IMR-90 (cell line): ENCODE measurements at regions of chr9 and their contacts with region 1.

Region 1: GRCh38 chr9:105157130-105157583 is 87.3 kb upstream of the SLC44A1 start:
- DNase-seq: peak; percentile 77
- ATAC-seq: peak; percentile 93
- H3K4me3 ChIP-seq: no peak overlapping the region
- H3K27ac ChIP-seq: peak overlapping the region; percentile 13; the same call in 1 of the 2 replicates
- H3K4me1 ChIP-seq: peaks cover 7% of the 10 kb centered on the region
- H3K27me3 ChIP-seq: no peaks in the 10 kb centered on the region
- CTCF ChIP-seq: peak; percentile 59
- POLR2A ChIP-seq: no peak
- RAD21 ChIP-seq: peak; percentile 69

Region 2: DNA sequence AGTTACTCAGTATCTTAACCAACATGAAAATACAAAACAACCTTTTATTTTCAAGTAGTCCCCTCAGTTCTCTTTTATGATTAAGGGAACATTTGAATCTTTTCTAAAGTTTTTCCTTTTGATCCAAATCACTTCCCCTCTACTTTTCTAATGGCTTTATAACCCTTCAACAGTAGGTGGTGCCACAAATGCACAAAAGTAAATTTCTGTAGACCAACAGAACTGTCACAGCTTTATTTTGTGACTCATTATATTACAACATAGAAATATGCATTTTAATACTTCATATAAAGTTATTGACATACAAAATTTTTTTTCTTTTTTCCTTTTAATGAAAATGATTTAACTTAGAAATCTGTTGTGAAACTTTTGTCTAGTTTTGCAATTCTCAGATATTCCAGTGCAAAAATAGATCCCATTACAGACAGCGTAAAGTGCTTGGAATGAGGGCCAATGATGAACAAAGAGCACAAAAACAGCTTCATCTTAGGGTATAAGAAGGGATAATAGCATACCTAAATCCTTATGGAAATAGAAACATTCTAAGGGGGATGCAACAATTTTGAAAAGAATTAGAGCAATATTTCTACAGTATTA is 376.3 kb before region 1 on chr9:
- CTCF ChIA-PET with region 1: no interaction called
- POLR2A ChIA-PET with region 1: no interaction called
- dilution Hi-C with region 1: no loop called
- in situ Hi-C with region 1: no loop called
- intact Hi-C with region 1: loop called (anchors 2 kb)
- DNase-seq: peak; percentile 32
- ATAC-seq: peak; percentile 51; the same call in 1 of the 2 replicates
- H3K4me3 ChIP-seq: no peak overlapping the region
- H3K27ac ChIP-seq: no peak overlapping the region
- H3K4me1 ChIP-seq: no peaks in the 10 kb centered on the region
- H3K27me3 ChIP-seq: no peaks in the 10 kb centered on the region
- CTCF ChIP-seq: peak; percentile 53
- POLR2A ChIP-seq: no peak
- RAD21 ChIP-seq: peak; percentile 64

Region 3: DNA sequence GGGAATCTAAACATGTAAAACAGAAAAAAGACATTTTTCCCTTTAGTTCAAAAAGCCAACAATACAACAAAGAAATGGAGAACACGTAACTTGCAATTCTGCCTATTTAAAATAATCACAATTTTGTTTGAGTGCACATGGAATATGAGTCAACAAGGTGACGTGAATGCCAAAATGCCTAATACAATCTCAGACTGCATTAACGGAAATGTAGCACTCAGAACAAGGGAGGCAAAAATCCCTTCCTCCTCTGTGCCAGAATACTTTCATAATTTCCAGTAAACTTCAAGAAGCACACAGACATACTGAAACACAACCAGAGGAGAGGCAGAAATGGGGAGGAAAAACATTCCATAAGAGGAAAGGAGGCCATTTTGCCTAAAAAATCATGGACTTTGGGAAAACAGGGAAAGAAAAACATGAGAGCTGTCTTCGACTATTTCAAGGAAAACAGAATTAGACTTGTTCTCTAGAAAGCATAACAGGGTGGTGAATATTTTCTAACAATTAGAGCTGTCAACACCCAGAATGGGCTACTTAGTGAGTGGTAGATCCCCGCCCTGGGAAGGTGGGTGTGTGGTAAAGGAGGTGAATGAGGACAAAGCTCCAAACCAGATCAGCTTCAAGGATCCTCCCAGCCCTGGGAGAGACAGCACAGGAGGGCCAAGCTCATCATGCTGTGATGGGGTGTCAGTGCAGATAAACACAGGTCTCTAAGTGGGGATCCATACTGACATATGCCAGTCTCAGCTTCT is 277.4 kb before region 1 on chr9:
- CTCF ChIA-PET with region 1: no interaction called
- POLR2A ChIA-PET with region 1: no interaction called
- dilution Hi-C with region 1: no loop called
- in situ Hi-C with region 1: no loop called
- intact Hi-C with region 1: no loop called
- DNase-seq: peak; percentile 88
- ATAC-seq: peak; percentile 72
- H3K4me3 ChIP-seq: no peak overlapping the region
- H3K27ac ChIP-seq: peak overlapping the region; percentile 26
- H3K4me1 ChIP-seq: 0 out of 2 replicates have a peak, but pooled peaks cover 4% of the 10 kb centered on the region
- H3K27me3 ChIP-seq: no peaks in the 10 kb centered on the region
- CTCF ChIP-seq: no peak
- POLR2A ChIP-seq: no peak
- RAD21 ChIP-seq: no peak

Region 4: GRCh38 chr9:104968025-104968982 is 188.9 kb before region 1 on chr9:
- CTCF ChIA-PET with region 1: no interaction called
- POLR2A ChIA-PET with region 1: no interaction called
- dilution Hi-C with region 1: no loop called
- in situ Hi-C with region 1: no loop called
- intact Hi-C with region 1: loop called (anchors 2 kb)
- DNase-seq: peak; percentile 90
- ATAC-seq: peak; percentile 94
- H3K4me3 ChIP-seq: peak overlapping the region; percentile 59
- H3K27ac ChIP-seq: peak overlapping the region; percentile 98
- H3K4me1 ChIP-seq: peaks cover 11% of the 10 kb centered on the region
- H3K27me3 ChIP-seq: no peaks in the 10 kb centered on the region
- CTCF ChIP-seq: no peak
- POLR2A ChIP-seq: no peak
- RAD21 ChIP-seq: 0 out of 2 replicates have a peak, but pooled peaks have one; percentile 1

Region 5: GRCh38 chr9:105064315-105065097 is 92.7 kb before region 1 on chr9:
- CTCF ChIA-PET with region 1: no interaction called
- POLR2A ChIA-PET with region 1: no interaction called
- dilution Hi-C with region 1: no loop called
- in situ Hi-C with region 1: no loop called
- intact Hi-C with region 1: loop called (anchors 2 kb)
- DNase-seq: peak; percentile 97
- ATAC-seq: peak; percentile 86
- H3K4me3 ChIP-seq: no peak overlapping the region
- H3K27ac ChIP-seq: peak overlapping the region; percentile 97
- H3K4me1 ChIP-seq: peaks cover 21% of the 10 kb centered on the region
- H3K27me3 ChIP-seq: no peaks in the 10 kb centered on the region
- CTCF ChIP-seq: no peak
- POLR2A ChIP-seq: peak; percentile 22
- RAD21 ChIP-seq: peak; percentile 25

Region 6: GRCh38 chr9:105414947-105415661 is 257.9 kb after region 1 on chr9:
- CTCF ChIA-PET with region 1: interaction called, 5 read pairs
- POLR2A ChIA-PET with region 1: no interaction called
- dilution Hi-C with region 1: no loop called
- in situ Hi-C with region 1: loop called (anchors 5 kb)
- intact Hi-C with region 1: loop called (anchors 1 kb)
- DNase-seq: peak; percentile 55
- ATAC-seq: peak; percentile 70
- H3K4me3 ChIP-seq: no peak overlapping the region
- H3K27ac ChIP-seq: no peak overlapping the region
- H3K4me1 ChIP-seq: peaks cover 6% of the 10 kb centered on the region
- H3K27me3 ChIP-seq: no peaks in the 10 kb centered on the region
- CTCF ChIP-seq: peak; percentile 77
- POLR2A ChIP-seq: no peak
- RAD21 ChIP-seq: peak; percentile 97